ENCODE measurements at regions of chr1 and their contacts with region 1.

Region 1: GRCh38 chr1:152459596-152460528 is 45.8 kb upstream of the CRNN start:
- DNase-seq: peak; percentile 71
- H3K4me3 ChIP-seq: peak overlapping the region; percentile 14
- H3K27ac ChIP-seq: peak overlapping the region; percentile 28
- H3K4me1 ChIP-seq: peaks cover 6% of the 10 kb centered on the region
- H3K27me3 ChIP-seq: peaks cover 12% of the 10 kb centered on the region
- CTCF ChIP-seq: peak; percentile 85

Region 2: DNA sequence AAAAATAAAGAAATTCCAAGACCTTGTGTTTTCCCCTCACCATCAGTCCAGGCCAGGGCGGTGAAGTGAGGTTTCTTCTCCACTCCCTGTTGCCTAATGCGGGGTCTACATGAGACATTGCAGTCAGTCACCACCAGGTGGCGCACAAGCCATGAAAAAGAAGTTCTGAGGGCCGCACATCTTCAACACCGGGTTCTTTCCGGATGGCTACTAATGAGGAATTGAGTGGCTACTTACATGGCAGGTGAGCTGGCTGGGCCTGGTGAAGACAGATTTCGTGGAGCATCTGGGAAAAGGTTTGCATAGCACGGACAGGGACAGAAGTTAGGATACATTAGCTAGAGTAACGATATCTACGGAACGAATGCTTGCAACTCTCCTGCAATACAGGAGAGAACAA is 407.3 kb before region 1 on chr1:
- intact Hi-C with region 1: loop called (anchors 10 kb)
- DNase-seq: peak; percentile 83
- H3K4me3 ChIP-seq: no peak overlapping the region
- H3K27ac ChIP-seq: no peak overlapping the region
- H3K4me1 ChIP-seq: peaks cover 12% of the 10 kb centered on the region
- H3K27me3 ChIP-seq: peaks cover 48% of the 10 kb centered on the region
- CTCF ChIP-seq: peak; percentile 94

Measured in left ventricle myocardium inferior (tissue), 1 donor.